ENCODE measurements at regions of chr18 and their contacts with region 1.

Region 1: GRCh38 chr18:29271496-29271895 is 1094.6 kb upstream of the CDH2 start:
- DNase-seq: no peak
- ATAC-seq: no peak
- H3K4me3 ChIP-seq: no peak overlapping the region
- H3K27ac ChIP-seq: no peak overlapping the region
- H3K4me1 ChIP-seq: no peaks in the 10 kb centered on the region
- H3K27me3 ChIP-seq: no peaks in the 10 kb centered on the region
- CTCF ChIP-seq: no peak
- POLR2A ChIP-seq: no peak

Region 2: GRCh38 chr18:29248805-29249204 is 22.7 kb before region 1 on chr18:
- intact Hi-C with region 1: no loop called
- DNase-seq: no peak
- ATAC-seq: no peak
- H3K4me3 ChIP-seq: no peak overlapping the region
- H3K27ac ChIP-seq: no peak overlapping the region
- H3K4me1 ChIP-seq: no peaks in the 10 kb centered on the region
- H3K27me3 ChIP-seq: no peaks in the 10 kb centered on the region
- CTCF ChIP-seq: no peak
- POLR2A ChIP-seq: no peak

Region 3: GRCh38 chr18:29326214-29326613 is 54.7 kb after region 1 on chr18:
- intact Hi-C with region 1: loop called in 1 of 10 experiments (anchors 10 kb)
- DNase-seq: no peak
- ATAC-seq: no peak
- H3K4me3 ChIP-seq: no peak overlapping the region
- H3K27ac ChIP-seq: no peak overlapping the region
- H3K4me1 ChIP-seq: no peaks in the 10 kb centered on the region
- H3K27me3 ChIP-seq: no peaks in the 10 kb centered on the region
- CTCF ChIP-seq: no peak
- POLR2A ChIP-seq: no peak

Measured in heart left ventricle (tissue), 16 donors.